Motor neuron (in vitro differentiated cells): ENCODE measurements at regions of chr16 and their contacts with region 1.

Region 1: GRCh38 chr16:19886073-19886941 is 1.7 kb upstream of the GPRC5B start:
- ATAC-seq: peak in 4 of 8 experiments; percentile 1 to 23 (median 20)
- H3K4me3 ChIP-seq: no peak overlapping the region
- H3K27ac ChIP-seq: no peak overlapping the region
- H3K4me1 ChIP-seq: peaks cover 10 to 12% of the 10 kb centered on the region in 2 donors

Region 2: GRCh38 chr16:19020689-19021088 is 865.6 kb before region 1 on chr16:
- in situ Hi-C with region 1: no loop called
- ATAC-seq: no peak
- H3K4me3 ChIP-seq: no peak overlapping the region
- H3K27ac ChIP-seq: no peak overlapping the region
- H3K4me1 ChIP-seq: no peaks in the 10 kb centered on the region

Region 3: DNA sequence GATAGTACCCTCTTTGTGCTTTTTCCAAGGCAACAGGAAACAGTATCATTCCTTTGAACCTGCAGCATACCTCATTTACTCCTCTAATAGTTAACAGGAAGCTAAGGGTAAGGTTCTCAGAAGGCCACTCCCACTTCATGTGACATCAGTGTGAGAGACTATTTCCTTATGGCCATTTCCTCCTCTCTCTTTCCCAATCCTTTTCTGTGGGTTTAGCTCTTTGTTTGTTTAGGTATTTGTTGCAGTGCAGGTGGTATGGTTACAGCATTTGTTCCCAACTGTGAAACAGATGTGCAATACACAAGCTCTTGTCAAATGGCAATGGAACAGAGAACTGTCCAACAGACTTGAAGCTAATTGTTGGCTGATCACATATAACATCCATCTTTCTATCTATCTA is 453.9 kb before region 1 on chr16:
- in situ Hi-C with region 1: no loop called
- ATAC-seq: no peak
- H3K4me3 ChIP-seq: no peak overlapping the region
- H3K27ac ChIP-seq: no peak overlapping the region
- H3K4me1 ChIP-seq: no peaks in the 10 kb centered on the region

Region 4: GRCh38 chr16:19583665-19584300 is 302.5 kb before region 1 on chr16:
- in situ Hi-C with region 1: loop called in 3 of 9 experiments (anchors 25 kb)
- ATAC-seq: peak in 6 of 8 experiments; percentile 38 to 98 (median 63)
- H3K4me3 ChIP-seq: no peak overlapping the region
- H3K27ac ChIP-seq: no peak overlapping the region
- H3K4me1 ChIP-seq: no peaks in the 10 kb centered on the region

Region 5: DNA sequence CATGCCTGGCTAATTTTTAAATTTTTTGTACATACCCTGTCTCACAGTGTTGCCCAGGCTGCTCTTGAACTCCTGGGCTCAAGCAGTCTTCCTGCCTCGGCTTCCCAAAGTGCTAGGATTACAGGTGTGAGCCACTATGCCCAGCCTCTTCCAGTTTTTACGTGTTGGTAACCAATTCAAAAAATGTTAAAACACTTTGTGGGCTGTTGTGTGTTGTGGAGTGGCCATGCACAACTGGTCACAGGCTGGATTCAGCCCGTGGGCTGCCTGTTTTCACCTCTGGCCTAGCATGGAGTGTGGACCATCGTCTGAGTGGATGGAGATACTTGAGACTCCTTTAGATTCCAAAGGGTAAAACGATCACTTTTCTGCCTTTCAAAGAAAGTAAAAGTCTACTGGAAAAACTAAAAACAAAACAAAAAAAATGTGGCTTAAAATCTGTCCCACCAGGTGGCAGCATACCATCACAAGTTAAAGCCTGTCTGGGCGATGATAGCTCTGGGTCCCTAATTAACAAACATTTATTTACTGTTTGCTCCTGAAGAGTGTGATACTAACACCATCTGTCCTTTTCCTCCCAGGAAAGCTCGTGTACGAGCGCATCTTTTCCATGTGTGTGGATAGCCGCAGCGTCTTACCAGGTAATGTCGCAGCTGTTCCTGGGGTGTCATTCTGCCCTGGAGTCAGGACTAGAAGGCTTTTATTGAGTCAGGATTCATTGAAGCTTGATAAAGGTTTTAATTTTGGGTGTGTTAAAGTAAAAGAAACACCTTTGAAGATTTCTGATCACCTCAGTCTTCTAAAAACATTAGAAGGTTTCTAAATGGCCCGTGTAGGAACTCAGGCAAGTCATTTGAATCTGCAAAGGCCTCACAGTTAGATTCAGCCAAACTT is 285.0 kb before region 1 on chr16:
- in situ Hi-C with region 1: loop called (anchors 10 to 25 kb)
- ATAC-seq: peak in 4 of 8 experiments; percentile 32 to 67 (median 51)
- H3K4me3 ChIP-seq: no peak overlapping the region
- H3K27ac ChIP-seq: no peak overlapping the region
- H3K4me1 ChIP-seq: no peaks in the 10 kb centered on the region

Region 6: DNA sequence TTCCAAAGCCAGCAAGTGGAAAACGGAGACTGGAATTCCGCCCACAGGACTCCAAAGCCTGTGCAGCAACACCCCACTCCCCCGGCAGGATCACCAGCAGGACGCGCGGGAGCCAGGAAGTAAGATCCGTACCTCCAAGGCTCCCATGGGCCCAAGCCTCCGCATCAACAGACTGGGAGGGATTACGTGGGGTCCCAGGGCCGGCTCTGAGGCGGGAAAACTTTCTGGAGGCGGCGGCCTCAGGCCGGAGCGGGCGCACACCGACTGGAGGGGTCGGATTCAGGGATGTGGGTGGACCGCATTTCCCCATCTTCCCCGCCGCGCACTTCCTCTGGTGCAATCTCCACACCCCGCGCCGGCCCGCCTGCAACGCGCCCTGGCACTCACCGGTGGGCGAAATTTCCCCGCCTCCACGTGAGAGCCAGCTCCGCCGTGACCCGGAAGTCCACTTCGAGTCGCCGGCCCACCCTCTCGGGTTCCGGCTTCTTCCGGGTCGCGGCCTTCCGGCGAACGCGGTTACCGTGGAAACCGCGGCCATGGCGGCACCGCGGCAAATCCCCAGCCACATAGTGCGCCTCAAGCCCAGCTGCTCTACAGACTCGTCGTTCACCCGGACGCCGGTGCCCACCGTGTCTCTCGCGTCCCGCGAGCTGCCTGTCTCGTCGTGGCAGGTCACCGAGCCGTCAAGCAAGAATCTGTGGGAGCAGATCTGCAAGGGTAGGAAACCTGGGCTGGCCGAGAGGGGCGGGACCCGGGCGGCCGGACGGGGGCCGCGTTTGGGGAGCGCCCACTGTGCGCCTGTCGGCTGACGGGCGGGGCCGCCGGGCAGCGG is 168.3 kb before region 1 on chr16 and contains the starts of genes IQCK and KNOP1:
- in situ Hi-C with region 1: loop called in 6 of 9 experiments (anchors 10 to 25 kb)
- ATAC-seq: peak; percentile 89 to 97 (median 95)
- H3K4me3 ChIP-seq: peak within 1 kb of the TSS; percentile 56 to 99 (median 81)
- H3K27ac ChIP-seq: peak within 1 kb of the TSS; percentile 65 to 87
- H3K4me1 ChIP-seq: peaks cover 16 to 18% of the 10 kb centered on the region in 2 donors
- total RNA-seq, gene IQCK: 7.0 to 44.1 (median 27.7) TPM
- total RNA-seq, gene KNOP1: 14.8 to 40.8 (median 24.7) TPM

Region 7: DNA sequence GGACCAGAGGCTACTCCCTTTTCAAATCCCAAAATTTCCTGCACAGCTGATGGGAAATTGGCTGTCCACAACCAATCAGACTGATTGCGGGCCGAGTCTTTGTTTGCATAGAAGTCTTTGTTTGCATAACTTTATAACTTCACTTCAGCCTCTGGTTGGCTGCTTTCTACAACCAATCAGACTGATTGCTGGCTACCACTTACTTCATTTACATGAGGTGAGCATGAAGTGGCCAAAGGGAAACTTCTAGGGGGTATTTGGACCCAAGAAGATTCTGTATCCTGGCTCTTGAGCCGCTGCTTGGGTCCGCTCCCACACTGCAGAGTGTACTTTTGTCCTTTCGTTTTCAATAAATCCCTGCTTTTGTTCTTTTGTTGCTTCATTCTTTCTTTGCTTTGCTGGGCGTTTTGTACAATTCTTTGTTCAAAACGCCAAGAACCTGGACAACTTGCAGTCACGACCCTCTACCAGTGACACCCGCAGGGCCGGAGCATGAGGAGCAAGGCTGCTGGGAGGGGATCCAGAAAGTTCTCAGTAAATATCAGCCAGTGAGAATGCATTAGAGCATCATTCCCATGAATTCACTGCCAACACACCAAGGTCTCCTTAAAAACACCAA is 100.7 kb before region 1 on chr16:
- in situ Hi-C with region 1: no loop called
- ATAC-seq: peak in 2 of 8 experiments; percentile 36 to 56
- H3K4me3 ChIP-seq: no peak overlapping the region
- H3K27ac ChIP-seq: no peak overlapping the region
- H3K4me1 ChIP-seq: peaks cover 26 to 30% of the 10 kb centered on the region in 2 donors

Region 8: GRCh38 chr16:20064931-20065330 is 178.6 kb after region 1 on chr16:
- in situ Hi-C with region 1: no loop called
- ATAC-seq: no peak
- H3K4me3 ChIP-seq: no peak overlapping the region
- H3K27ac ChIP-seq: no peak overlapping the region
- H3K4me1 ChIP-seq: no peaks in the 10 kb centered on the region